Panc1 (cell line): ENCODE measurements at regions of chr7 and their contacts with region 1.

Region 1: GRCh38 chr7:101542527-101543241 is 86.4 kb downstream of the MYL10 start:
- DNase-seq: peak; percentile 48
- ATAC-seq: peak; percentile 70
- H3K4me3 ChIP-seq: peak overlapping the region in 1 of 2 experiments; percentile 19; a peak in 1 of 4 replicates
- H3K27ac ChIP-seq: no peak overlapping the region
- H3K4me1 ChIP-seq: peaks cover 13% of the 10 kb centered on the region
- H3K27me3 ChIP-seq: no peaks in the 10 kb centered on the region
- CTCF ChIP-seq: peak; percentile 94

Region 2: DNA sequence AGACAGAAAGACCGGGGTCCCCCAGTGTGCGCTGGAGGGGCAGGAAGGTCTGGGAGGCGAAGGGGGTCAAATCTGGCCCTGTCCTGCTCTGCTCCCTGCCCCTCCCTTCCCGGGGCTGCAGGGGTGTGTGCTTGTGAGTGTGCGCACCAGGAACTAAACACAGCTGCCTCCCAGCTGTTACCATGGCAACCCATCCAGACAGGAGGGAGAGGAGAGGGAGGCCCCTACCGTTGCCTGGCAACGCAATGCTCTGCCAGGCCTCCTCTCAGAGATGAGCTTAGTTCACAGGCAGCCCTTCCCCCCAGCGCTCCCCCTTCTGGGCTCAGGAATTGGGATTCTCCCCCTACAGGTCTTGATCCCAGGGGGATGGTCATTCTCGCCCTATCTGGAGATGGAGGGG is 1052.9 kb before region 1 on chr7:
- CTCF ChIA-PET with region 1: no interaction called
- POLR2A ChIA-PET with region 1: no interaction called
- in situ Hi-C with region 1: no loop called
- intact Hi-C with region 1: no loop called
- DNase-seq: no peak
- ATAC-seq: peak; percentile 63
- H3K4me3 ChIP-seq: no peak overlapping the region
- H3K27ac ChIP-seq: no peak overlapping the region
- H3K4me1 ChIP-seq: peaks cover 17% of the 10 kb centered on the region
- H3K27me3 ChIP-seq: no peaks in the 10 kb centered on the region
- CTCF ChIP-seq: no peak

Region 3: DNA sequence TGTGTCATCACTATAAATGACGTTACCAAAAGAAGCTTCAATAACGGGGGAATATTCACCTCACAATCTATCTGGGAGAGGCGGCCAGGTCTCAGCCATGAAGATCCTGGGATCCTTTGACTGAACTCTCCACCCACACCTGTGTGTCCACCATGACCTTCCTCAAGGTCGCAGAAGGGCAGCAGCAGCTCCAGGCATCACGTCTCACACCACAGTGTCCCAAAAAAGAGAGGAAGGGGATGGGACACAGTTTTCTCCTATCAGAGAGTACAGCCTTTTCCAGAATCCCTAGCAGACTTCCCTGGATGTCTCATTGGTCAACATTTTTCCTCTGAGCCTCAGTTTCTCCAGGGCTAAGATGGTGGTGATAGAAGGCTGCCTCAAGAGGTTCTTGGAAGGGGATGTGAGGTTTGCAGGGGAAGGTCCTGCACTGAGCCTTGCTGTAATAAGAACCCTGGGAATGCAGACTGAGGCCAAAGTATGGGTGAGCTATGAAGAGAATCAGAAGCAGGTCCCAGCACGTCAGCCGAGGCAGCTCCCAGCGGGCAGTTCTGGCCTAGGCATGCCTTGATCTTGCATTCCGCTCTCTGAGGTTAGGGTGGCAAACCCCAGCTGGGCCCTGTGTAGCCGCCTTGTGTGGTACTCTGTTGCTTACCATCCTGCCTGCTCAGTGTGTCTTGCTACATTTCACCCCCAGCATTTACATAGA is 116.2 kb before region 1 on chr7:
- CTCF ChIA-PET with region 1: no interaction called
- POLR2A ChIA-PET with region 1: no interaction called
- in situ Hi-C with region 1: no loop called
- intact Hi-C with region 1: no loop called
- DNase-seq: no peak
- ATAC-seq: no peak
- H3K4me3 ChIP-seq: no peak overlapping the region
- H3K27ac ChIP-seq: no peak overlapping the region
- H3K4me1 ChIP-seq: no peaks in the 10 kb centered on the region
- H3K27me3 ChIP-seq: no peaks in the 10 kb centered on the region
- CTCF ChIP-seq: no peak

Region 4: DNA sequence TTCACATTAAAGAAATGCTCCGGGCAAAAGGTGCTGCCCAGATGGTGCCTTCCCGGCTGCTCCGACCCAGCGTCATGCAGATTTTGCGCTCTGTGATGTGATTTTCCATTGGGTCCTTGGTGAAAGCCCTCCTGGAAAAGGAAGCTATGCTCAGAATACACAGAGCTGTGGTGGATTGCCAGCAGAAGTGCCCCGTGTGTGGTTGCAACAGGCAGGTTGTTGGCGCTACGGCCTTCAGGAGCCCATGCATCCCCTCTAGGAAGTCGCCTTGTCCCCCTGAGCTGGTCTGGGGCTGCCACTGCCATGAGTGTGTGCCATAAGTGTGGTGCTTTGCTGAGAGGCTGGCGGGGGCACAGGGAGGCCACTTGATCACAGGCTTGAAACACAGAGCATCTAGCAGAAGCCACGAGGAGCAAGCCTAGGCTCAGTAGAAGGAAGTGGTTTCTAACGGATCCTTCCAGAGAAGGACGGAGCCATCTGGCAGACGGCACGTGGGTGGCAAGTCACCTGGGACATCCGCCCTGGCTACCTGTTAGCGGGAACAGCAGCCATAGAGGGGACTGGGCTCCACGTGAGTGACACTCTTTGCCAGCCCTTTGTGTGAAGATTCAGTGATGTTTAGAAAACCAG is 485.6 kb after region 1 on chr7:
- CTCF ChIA-PET with region 1: interaction called, 11 read pairs
- POLR2A ChIA-PET with region 1: no interaction called
- in situ Hi-C with region 1: no loop called
- intact Hi-C with region 1: no loop called
- DNase-seq: no peak
- ATAC-seq: no peak
- H3K4me3 ChIP-seq: no peak overlapping the region
- H3K27ac ChIP-seq: no peak overlapping the region
- H3K4me1 ChIP-seq: no peaks in the 10 kb centered on the region; the same call in 1 of the 2 replicates
- H3K27me3 ChIP-seq: no peaks in the 10 kb centered on the region
- CTCF ChIP-seq: no peak

Region 5: GRCh38 chr7:102272075-102272917 is 729.6 kb after region 1 on chr7:
- CTCF ChIA-PET with region 1: interaction called, 9 read pairs
- POLR2A ChIA-PET with region 1: no interaction called
- in situ Hi-C with region 1: no loop called
- intact Hi-C with region 1: loop called (anchors 5 kb)
- DNase-seq: peak; percentile 52
- ATAC-seq: peak; percentile 91
- H3K4me3 ChIP-seq: no peak overlapping the region
- H3K27ac ChIP-seq: no peak overlapping the region
- H3K4me1 ChIP-seq: peaks cover 8% of the 10 kb centered on the region
- H3K27me3 ChIP-seq: no peaks in the 10 kb centered on the region
- CTCF ChIP-seq: peak; percentile 94